Activated naive CD4-positive, alpha-beta T cell treated with anti-CD3 and anti-CD28 coated beads for 36 hours (primary cell): ENCODE measurements at regions of chr3 and their contacts with region 1.

Region 1: DNA sequence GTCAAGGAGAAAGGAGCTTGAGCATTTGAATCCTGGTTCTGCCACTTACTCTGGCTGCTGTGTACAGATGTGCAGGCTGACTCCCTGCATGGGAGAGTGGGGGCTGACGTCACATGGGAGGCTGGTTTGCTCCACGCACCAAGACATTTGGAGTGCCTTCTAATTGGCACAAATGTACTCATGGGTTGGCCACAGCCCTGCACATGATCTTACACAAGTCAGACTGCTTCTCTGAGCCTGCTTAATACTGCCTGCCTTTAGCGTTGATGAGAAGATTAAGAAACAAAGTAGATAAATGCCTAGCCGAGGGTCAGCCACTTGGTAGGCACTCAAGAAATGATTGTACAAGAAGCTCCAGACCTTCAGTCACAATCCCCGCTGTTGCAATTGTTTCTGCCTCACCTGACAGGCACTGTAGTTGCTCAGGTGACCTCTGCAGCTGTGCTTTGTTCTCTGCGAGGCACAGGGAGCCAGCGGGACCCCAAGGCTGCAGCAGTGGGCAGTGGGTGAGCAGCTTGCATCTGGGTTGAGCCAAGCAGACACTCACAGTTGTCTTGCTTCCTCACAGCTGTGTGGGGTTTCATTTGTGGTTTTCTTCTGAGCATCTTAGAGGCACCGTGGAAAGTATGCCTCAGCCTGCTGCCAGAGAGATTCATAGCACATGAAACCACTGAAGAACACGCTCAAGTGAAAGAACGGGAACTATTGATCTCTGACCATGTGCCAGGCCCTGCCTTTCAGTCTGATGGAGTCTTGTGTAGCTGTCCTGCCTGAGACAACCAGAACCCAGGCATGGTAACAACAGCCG is 33.1 kb downstream of the GRK7 start:
- DNase-seq: peak; percentile 90
- H3K4me3 Mint-ChIP-seq: peak overlapping the region; percentile 74
- H3K27ac Mint-ChIP-seq: peak overlapping the region; percentile 89
- H3K4me1 Mint-ChIP-seq: peaks cover 46% of the 10 kb centered on the region
- H3K27me3 Mint-ChIP-seq: no peaks in the 10 kb centered on the region

Region 2: GRCh38 chr3:140941434-140942220 is 854.7 kb before region 1 on chr3 and contains the start of gene SLC25A36:
- CTCF ChIA-PET with region 1: no interaction called
- intact Hi-C with region 1: loop called (anchors 5 kb)
- DNase-seq: peak; percentile 99
- H3K4me3 Mint-ChIP-seq: peak within 1 kb of the TSS; percentile 89
- H3K27ac Mint-ChIP-seq: peak within 1 kb of the TSS; percentile 88
- H3K4me1 Mint-ChIP-seq: peaks cover 35% of the 10 kb centered on the region
- H3K27me3 Mint-ChIP-seq: no peaks in the 10 kb centered on the region
- total RNA-seq, gene SLC25A36: 48.7 to 50.1 TPM

Region 3: GRCh38 chr3:141237701-141238521 is 558.4 kb before region 1 on chr3:
- CTCF ChIA-PET with region 1: no interaction called
- intact Hi-C with region 1: loop called (anchors 5 kb)
- DNase-seq: peak; percentile 56
- H3K4me3 Mint-ChIP-seq: peak overlapping the region; percentile 53
- H3K27ac Mint-ChIP-seq: peak overlapping the region; percentile 78
- H3K4me1 Mint-ChIP-seq: peaks cover 69% of the 10 kb centered on the region
- H3K27me3 Mint-ChIP-seq: no peaks in the 10 kb centered on the region

Region 4: GRCh38 chr3:141487521-141488252 is 308.6 kb before region 1 on chr3:
- CTCF ChIA-PET with region 1: no interaction called
- intact Hi-C with region 1: loop called (anchors 5 kb)
- DNase-seq: peak; percentile 93
- H3K4me3 Mint-ChIP-seq: peak overlapping the region; percentile 87
- H3K27ac Mint-ChIP-seq: peak overlapping the region; percentile 94
- H3K4me1 Mint-ChIP-seq: peaks cover 68% of the 10 kb centered on the region
- H3K27me3 Mint-ChIP-seq: no peaks in the 10 kb centered on the region

Region 5: GRCh38 chr3:141845407-141846049 is 49.2 kb after region 1 on chr3:
- CTCF ChIA-PET with region 1: interaction called, 4 read pairs
- intact Hi-C with region 1: loop called (anchors 1 kb)
- DNase-seq: peak; percentile 48
- H3K4me3 Mint-ChIP-seq: no peak overlapping the region
- H3K27ac Mint-ChIP-seq: no peak overlapping the region
- H3K4me1 Mint-ChIP-seq: peaks cover 13% of the 10 kb centered on the region
- H3K27me3 Mint-ChIP-seq: no peaks in the 10 kb centered on the region

Region 6: DNA sequence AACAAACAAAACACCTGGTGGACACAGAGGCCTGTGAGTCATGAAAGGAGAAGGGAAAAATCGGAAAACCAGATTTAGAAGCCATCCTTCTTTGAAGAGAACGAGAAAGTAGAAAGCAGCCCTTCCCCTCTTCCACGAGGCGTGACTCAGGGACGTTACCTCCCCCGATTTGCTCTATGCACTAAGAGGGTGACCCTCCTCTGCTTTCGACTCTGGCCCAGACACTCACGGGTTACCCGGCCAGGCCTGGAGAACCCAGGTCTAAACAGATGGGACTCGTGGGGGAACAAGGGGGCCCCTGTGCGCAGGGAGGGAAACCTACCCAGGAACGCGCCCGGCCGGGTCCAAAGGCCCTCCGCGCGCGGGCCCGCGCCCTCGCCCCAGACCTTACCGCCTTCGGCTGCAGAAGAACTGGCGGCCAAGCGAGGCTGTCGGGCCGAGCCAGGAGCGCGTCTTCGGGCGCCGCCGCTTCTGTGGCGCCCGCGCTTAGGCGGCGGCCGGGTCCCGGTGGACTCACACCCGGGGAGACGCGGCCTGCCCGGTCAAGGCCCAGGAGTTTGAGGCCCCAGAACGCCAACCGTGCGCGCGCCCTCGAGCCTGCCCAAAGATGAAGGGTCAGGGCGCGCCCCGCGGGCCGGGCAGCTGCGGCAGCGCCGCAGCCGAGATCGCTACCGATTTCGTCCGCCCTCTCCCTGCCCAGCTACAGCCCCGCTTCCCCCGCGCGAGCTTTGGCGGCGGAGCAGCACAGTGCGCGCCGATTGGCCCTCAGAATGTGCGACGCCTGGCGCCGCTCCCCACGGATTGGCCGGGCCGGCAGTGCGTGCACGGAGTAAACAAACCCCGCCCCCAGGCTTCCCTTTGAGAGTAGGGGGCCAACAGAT is 352.7 kb after region 1 on chr3 and contains the start of gene TFDP2:
- CTCF ChIA-PET with region 1: no interaction called
- intact Hi-C with region 1: loop called (anchors 2 kb)
- DNase-seq: peak; percentile 89
- H3K4me3 Mint-ChIP-seq: peak within 1 kb of the TSS; percentile 84
- H3K27ac Mint-ChIP-seq: no peak within 1 kb of the TSS
- H3K4me1 Mint-ChIP-seq: peaks cover 24% of the 10 kb centered on the region
- H3K27me3 Mint-ChIP-seq: no peaks in the 10 kb centered on the region
- total RNA-seq, gene TFDP2: 23.0 to 25.0 TPM